Upper lobe of right lung (tissue), 1 donor: ENCODE measurements at regions of chr17 and their contacts with region 1.

Region 1: GRCh38 chr17:57747221-57748017 is 2.3 kb upstream of the CCDC182 start:
- DNase-seq: no peak
- ATAC-seq: peak; percentile 70
- H3K4me3 ChIP-seq: no peak overlapping the region
- H3K27ac ChIP-seq: no peak overlapping the region
- H3K4me1 ChIP-seq: peaks cover 12% of the 10 kb centered on the region
- H3K27me3 ChIP-seq: peaks cover 4% of the 10 kb centered on the region
- CTCF ChIP-seq: peak; percentile 70

Region 2: DNA sequence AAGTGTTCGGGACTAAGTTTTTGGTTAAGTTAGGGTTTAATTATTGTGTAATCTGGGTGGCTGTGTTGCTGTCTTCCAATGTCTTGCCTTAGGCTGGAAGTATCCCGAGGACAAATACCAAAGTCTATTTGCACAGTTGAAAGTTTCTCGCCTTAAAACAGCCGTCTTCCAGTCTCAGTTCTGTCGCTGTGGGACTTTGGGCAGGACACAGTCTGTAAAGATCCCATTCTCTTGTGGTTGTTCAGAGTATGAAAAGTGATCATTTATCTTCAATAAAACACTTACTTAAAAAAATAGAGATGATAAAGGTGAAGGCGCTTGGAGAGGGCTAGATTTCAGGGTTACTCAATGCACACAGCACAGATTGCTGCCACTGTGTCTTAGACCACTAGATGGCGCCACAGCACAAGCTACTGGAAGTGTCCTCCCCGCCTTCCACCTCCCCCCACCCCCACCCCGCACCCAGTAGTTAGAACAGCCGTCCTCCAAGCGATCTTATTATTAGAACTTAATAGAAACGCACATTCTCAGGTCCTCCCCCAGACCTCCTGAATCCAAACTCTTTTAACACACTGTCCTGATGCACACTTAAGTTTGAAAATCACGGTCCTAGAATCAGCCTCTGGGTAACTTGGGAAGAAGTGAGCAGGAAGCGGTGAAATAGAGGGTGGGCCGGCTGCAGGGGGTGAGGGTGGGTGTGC is 616.5 kb before region 1 on chr17:
- intact Hi-C with region 1: loop called (anchors 10 kb)
- DNase-seq: peak; percentile 83
- ATAC-seq: peak; percentile 97
- H3K4me3 ChIP-seq: no peak overlapping the region
- H3K27ac ChIP-seq: no peak overlapping the region
- H3K4me1 ChIP-seq: no peaks in the 10 kb centered on the region
- H3K27me3 ChIP-seq: no peaks in the 10 kb centered on the region
- CTCF ChIP-seq: peak; percentile 86

Region 3: DNA sequence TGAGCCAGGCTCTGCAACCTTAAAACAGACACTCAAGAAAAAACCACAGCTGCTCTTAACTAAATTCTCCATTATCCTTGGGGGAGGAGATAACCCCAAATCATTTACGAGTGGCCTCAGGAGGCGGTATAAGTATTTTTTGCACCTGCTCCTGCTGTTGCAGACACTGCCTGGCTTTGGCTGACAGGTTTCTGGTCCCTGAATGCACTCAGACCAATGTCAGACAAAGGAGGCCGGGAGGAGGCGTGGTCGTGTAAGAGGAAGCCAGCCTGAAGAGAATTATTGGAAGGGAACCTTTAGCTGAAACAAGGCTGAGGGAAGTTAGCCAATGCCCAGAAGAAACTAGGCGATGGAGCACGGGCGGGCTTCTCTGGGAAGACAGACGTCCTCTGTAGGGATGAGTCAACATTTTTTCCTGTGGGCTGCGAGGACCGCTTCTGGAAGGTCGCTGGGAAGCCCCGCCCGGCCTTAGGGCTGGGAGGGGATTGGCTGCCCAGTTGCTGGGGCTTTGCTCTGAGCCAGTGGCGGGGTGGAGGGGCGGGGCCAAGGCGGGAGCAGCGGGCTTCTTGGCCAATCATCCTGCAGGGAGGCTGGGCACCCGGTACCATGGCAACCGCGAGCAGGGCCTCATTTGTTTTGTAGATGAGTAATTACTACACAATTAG is 84.6 kb before region 1 on chr17:
- intact Hi-C with region 1: no loop called
- DNase-seq: peak; percentile 95
- ATAC-seq: peak; percentile 98
- H3K4me3 ChIP-seq: peak overlapping the region; percentile 32
- H3K27ac ChIP-seq: peak overlapping the region; percentile 37
- H3K4me1 ChIP-seq: peaks cover 11% of the 10 kb centered on the region
- H3K27me3 ChIP-seq: no peaks in the 10 kb centered on the region
- CTCF ChIP-seq: no peak

Region 4: DNA sequence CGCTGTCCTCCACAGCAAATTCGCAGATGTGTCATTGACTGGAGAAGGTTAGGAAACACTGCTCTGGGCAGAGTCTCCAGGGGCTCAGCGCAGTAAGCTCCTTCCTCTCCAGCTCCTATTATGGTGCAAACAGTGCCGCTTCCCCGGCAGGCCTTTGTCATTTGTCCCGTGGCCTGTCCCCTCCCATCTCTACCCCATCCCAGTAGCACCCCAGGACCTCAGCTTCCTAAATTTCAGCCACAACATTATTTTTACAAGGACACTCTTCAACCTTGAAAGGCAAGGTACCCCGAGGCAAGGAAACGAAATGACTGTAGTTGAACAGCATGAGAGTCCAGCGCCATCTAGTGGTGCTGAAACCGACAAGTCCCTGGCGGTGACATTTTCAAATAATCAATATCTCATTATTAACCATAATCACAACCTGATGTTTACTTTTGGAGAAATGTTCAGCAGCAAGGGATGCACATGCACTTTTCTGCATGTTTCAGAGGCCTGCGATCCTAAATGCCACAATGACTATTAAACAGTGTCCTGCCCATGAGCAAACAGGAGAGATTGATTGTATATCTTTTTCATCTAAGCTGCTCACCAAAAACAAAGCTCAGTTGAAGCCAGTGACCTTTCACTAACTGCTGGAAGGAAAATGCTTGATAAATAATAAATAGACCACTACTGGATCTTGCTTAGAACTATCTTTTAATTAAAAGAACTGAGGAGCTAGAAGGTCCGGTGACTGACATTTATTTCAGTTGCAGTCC is 85.9 kb after region 1 on chr17:
- intact Hi-C with region 1: loop called (anchors 10 kb)
- DNase-seq: peak; percentile 72
- ATAC-seq: peak; percentile 87
- H3K4me3 ChIP-seq: peak overlapping the region; percentile 46
- H3K27ac ChIP-seq: peak overlapping the region; percentile 11
- H3K4me1 ChIP-seq: peaks cover 4% of the 10 kb centered on the region
- H3K27me3 ChIP-seq: no peaks in the 10 kb centered on the region
- CTCF ChIP-seq: peak; percentile 91